A673 (cell line): ENCODE measurements at regions of chr2 and their contacts with region 1.

Region 1: DNA sequence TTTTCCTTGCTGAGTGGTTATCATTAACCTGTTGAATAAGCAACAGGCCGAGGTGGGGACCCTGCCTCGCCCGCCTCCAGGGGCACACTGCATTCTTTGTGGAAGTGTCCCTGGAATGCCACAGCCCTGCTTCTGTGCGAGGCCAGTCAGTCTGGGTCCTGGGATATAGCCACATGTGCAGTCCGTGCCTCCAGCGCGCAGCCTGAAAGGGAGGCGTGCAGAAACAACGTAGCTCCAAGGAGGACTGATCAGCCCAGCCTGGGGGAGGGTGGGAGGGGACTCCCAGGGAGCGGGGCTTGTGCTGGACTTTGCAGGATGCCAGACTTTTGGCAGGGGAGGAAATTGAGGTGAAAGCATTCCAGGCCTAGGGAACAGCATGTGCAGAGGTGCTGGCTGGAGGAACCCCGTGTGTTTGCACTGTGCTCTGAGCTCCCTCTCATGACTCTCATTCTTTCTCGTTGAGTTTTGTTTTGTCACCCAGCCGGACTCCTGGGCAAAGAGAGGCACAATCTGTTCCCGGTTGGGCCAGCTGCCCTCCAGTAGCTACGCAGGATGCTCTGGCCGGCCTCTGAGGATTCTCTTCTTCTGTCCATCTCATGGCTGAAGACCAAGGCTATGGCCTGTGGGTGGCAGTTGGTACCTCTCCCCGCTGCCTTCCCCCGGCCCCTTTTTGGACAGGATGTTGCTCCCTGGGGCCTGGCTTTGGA is 39.7 kb downstream of the HPCAL1 start:
- DNase-seq: no peak
- H3K4me3 ChIP-seq: no peak overlapping the region
- H3K27ac ChIP-seq: no peak overlapping the region
- H3K4me1 ChIP-seq: no peaks in the 10 kb centered on the region
- H3K27me3 ChIP-seq: no peaks in the 10 kb centered on the region
- CTCF ChIP-seq: no peak

Region 2: DNA sequence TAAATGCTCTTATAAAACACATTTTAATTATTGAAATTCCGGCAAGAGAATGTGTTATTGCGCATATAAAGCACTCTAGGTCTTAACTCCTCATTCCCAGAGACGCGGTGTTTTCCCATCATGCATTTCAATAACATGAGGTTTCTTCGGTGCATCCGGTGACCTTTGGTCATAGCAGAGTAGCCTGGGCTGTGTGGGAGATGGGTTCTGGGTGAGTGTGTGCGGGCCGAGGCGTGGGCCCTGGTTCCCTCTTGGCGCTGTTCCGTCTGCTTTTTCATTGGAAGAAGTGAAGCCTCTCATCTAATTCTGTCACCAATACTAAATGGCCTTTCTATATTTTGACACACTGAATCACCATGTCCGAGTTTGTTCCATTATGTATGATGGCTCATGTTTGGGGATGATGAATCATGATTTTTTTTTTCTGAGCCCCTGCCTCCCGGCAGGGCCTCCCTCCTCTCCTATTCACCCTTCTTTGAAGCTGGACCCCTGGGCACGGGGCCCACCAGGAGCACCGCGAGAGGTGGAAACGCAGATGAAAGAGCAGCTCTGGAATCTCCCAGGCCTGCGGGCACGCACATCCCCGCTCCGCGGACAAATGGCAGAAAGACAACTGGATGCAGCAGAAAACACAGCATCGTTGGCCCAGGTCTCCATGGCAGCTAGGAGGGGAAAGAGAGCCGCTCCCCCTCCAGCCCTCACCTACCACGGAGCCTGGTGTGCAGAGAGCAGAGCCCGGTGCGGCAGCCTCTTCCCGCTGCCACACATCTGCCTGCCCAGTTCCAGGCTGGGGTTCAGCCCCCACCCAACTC is 125.5 kb before region 1 on chr2:
- CTCF ChIA-PET with region 1: no interaction called
- POLR2A ChIA-PET with region 1: no interaction called
- intact Hi-C with region 1: no loop called
- DNase-seq: no peak
- H3K4me3 ChIP-seq: no peak overlapping the region
- H3K27ac ChIP-seq: no peak overlapping the region
- H3K4me1 ChIP-seq: no peaks in the 10 kb centered on the region
- H3K27me3 ChIP-seq: no peaks in the 10 kb centered on the region
- CTCF ChIP-seq: no peak

Region 3: DNA sequence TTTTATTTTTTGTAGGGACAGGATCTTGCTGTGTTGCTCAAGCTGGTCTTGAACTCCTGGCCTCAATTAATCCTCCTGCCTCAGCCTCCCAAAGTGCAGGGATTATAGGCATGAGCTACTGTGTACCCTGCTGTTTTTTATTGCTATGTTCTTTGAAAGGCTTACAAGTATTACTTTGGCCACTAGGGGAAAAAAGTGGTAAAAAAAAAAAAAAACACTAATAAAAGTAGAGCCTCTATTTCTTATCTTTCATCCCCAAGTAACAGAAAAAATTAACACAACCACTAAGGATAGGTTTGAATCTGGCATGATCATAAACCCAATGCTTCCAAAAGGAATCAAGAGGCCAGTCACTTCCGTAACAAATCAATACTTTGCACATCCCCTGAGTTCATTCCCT is 335.8 kb after region 1 on chr2:
- CTCF ChIA-PET with region 1: no interaction called
- POLR2A ChIA-PET with region 1: interaction called, 11 read pairs
- intact Hi-C with region 1: no loop called
- DNase-seq: peak; percentile 19
- H3K4me3 ChIP-seq: no peak overlapping the region
- H3K27ac ChIP-seq: no peak overlapping the region
- H3K4me1 ChIP-seq: no peaks in the 10 kb centered on the region
- H3K27me3 ChIP-seq: no peaks in the 10 kb centered on the region
- CTCF ChIP-seq: peak; percentile 42; the same call in 1 of the 2 replicates